Activated CD4-positive, alpha-beta T cell treated with anti-CD3 and anti-CD28 coated beads for 36 hours (primary cell): ENCODE measurements at regions of chr1 and their contacts with region 1.

Region 1: DNA sequence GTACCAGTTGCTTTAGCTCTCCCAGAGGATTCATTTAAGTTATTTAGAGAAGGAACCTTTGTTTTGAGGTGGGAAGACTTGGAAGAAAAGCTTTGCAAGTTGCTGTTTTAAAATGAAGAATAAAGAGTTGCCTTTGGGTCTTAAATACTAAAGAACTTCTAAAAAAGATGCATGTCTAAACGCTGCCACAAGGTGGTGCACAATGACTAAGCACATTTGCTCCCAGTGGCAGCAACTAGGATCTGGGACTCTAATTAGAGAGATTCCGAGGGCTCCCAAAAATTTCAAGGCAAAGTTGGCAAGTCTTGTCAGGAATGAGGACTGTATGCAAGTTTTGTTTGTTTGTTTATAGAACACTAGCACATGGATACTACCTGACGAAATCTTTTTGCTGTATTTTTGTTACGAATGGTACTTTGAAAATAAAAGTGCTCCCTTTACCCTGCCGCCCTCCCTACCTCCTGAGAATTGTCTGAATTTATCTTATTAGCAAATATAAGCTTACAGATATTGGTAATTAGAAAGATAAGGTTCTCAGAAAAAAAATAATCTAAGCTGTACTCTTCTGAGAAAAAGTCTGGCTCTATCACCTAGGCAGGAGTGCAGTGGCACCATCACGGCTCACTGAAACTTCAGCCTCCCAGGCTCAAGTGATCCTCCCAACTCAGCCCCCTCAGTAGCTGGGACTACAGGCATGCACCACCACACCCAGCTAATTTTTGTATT is 121.8 kb downstream of the HFM1 start:
- DNase-seq: peak; percentile 64
- ATAC-seq: no peak
- H3K4me3 Mint-ChIP-seq: no peak overlapping the region
- H3K27ac Mint-ChIP-seq: no peak overlapping the region
- H3K4me1 Mint-ChIP-seq: no peaks in the 10 kb centered on the region
- H3K27me3 Mint-ChIP-seq: peaks cover 5% of the 10 kb centered on the region

Region 2: GRCh38 chr1:91153341-91153740 is 129.5 kb before region 1 on chr1:
- CTCF ChIA-PET with region 1: no interaction called
- POLR2A ChIA-PET with region 1: no interaction called
- intact Hi-C with region 1: no loop called
- DNase-seq: no peak
- ATAC-seq: no peak
- H3K4me3 Mint-ChIP-seq: no peak overlapping the region
- H3K27ac Mint-ChIP-seq: no peak overlapping the region
- H3K4me1 Mint-ChIP-seq: no peaks in the 10 kb centered on the region
- H3K27me3 Mint-ChIP-seq: peaks cover 12% of the 10 kb centered on the region

Region 3: GRCh38 chr1:91404151-91405012 is 121.5 kb after region 1 on chr1 and contains the start of gene HFM1:
- CTCF ChIA-PET with region 1: interaction called, 4 read pairs
- POLR2A ChIA-PET with region 1: no interaction called
- intact Hi-C with region 1: loop called (anchors 1 kb)
- DNase-seq: peak; percentile 67
- ATAC-seq: peak; percentile 96
- H3K4me3 Mint-ChIP-seq: peak within 1 kb of the TSS; percentile 67
- H3K27ac Mint-ChIP-seq: peak within 1 kb of the TSS; percentile 60
- H3K4me1 Mint-ChIP-seq: peaks cover 7% of the 10 kb centered on the region
- H3K27me3 Mint-ChIP-seq: peaks cover 44% of the 10 kb centered on the region
- total RNA-seq, gene HFM1: not detected

Region 4: DNA sequence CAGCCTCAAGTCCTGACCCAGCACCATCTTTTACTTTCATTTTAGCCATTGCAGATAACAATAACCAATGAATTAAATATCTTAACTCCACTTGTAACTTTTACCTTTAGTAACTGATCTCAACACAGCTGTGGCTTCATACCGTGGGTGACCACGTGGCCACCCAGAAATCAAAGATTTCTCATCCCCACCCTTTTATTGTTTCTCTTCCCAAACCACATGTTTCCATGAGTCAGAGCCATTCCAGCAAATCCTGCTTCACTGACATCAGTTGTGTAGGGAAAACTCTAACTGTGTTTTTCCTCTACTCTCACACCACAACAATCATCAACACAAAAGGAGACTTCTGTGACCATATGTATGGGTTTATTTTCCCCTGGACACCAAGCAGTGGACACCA is 641.3 kb after region 1 on chr1:
- CTCF ChIA-PET with region 1: interaction called, 5 read pairs
- POLR2A ChIA-PET with region 1: no interaction called
- intact Hi-C with region 1: loop called (anchors 1 kb)
- DNase-seq: no peak
- ATAC-seq: no peak
- H3K4me3 Mint-ChIP-seq: no peak overlapping the region
- H3K27ac Mint-ChIP-seq: no peak overlapping the region
- H3K4me1 Mint-ChIP-seq: peaks cover 9% of the 10 kb centered on the region
- H3K27me3 Mint-ChIP-seq: no peaks in the 10 kb centered on the region